ENCODE measurements at regions of chr1 and their contacts with region 1.

Region 1: DNA sequence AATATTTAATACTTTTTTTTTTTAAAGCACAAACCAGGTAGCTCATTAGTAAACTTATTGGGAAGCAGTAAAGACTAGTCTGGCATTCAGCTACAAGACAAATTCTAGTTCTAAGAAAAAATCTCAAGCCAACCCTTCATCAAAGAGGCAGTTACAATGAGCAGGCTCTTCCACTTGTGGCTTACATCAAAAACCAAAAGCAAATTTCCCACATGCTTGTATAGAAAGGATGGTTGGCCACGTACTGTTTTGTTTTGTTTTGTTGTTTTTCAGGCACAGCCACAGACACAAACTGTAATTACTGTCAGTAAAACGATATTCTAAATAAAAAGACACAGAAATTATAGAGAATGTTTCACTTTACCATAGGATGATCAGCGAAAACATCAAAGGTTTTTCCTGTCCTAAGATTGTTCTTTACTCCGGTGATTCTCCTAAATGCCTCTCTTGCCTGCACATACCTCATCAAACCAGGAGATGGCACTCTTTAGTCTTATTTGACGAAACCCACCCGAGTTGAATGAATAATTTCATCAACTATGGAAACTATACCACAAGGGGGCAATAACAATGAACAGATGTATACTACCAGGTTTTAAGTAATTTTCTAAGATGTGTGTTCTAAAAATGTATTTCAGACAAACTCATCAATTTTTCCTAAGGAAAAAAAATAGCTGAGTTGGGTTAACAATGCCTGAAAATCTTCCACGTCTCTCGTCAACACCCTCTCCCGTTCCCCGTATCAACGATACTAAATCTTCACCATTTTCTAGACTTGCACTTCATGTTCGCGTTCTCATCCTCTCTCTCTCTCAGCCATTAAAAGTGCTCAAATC is 26.9 kb downstream of the RPL5 start:
- DNase-seq: peak; percentile 45 to 82
- H3K4me3 ChIP-seq: no peak overlapping the region
- H3K27ac ChIP-seq: no peak overlapping the region
- H3K4me1 ChIP-seq: no peaks in the 10 kb centered on the region
- H3K27me3 ChIP-seq: no peaks in the 10 kb centered on the region
- CTCF ChIP-seq: peak; percentile 100

Region 2: GRCh38 chr1:92563457-92564216 is 295.1 kb before region 1 on chr1:
- CTCF ChIA-PET with region 1: no interaction called
- POLR2A ChIA-PET with region 1: no interaction called
- intact Hi-C with region 1: no loop called
- DNase-seq: no peak
- H3K4me3 ChIP-seq: no peak overlapping the region
- H3K27ac ChIP-seq: no peak overlapping the region
- H3K4me1 ChIP-seq: no peaks in the 10 kb centered on the region
- H3K27me3 ChIP-seq: no peaks in the 10 kb centered on the region
- CTCF ChIP-seq: no peak

Region 3: GRCh38 chr1:92994105-92994712 is 135.4 kb after region 1 on chr1:
- CTCF ChIA-PET with region 1: interaction called, 4 read pairs
- POLR2A ChIA-PET with region 1: interaction called, 4 read pairs
- intact Hi-C with region 1: loop called (anchors 1 kb)
- DNase-seq: peak; percentile 33 to 79
- H3K4me3 ChIP-seq: no peak overlapping the region
- H3K27ac ChIP-seq: no peak overlapping the region
- H3K4me1 ChIP-seq: peaks cover 66% of the 10 kb centered on the region
- H3K27me3 ChIP-seq: no peaks in the 10 kb centered on the region
- CTCF ChIP-seq: peak; percentile 98

Region 4: GRCh38 chr1:93483200-93483599 is 624.4 kb after region 1 on chr1:
- CTCF ChIA-PET with region 1: interaction called, 11 read pairs
- POLR2A ChIA-PET with region 1: no interaction called
- intact Hi-C with region 1: no loop called
- DNase-seq: no peak
- H3K4me3 ChIP-seq: no peak overlapping the region
- H3K27ac ChIP-seq: no peak overlapping the region
- H3K4me1 ChIP-seq: no peaks in the 10 kb centered on the region
- H3K27me3 ChIP-seq: no peaks in the 10 kb centered on the region
- CTCF ChIP-seq: no peak